ENCODE measurements at regions of chr20 and their contacts with region 1.

Region 1: DNA sequence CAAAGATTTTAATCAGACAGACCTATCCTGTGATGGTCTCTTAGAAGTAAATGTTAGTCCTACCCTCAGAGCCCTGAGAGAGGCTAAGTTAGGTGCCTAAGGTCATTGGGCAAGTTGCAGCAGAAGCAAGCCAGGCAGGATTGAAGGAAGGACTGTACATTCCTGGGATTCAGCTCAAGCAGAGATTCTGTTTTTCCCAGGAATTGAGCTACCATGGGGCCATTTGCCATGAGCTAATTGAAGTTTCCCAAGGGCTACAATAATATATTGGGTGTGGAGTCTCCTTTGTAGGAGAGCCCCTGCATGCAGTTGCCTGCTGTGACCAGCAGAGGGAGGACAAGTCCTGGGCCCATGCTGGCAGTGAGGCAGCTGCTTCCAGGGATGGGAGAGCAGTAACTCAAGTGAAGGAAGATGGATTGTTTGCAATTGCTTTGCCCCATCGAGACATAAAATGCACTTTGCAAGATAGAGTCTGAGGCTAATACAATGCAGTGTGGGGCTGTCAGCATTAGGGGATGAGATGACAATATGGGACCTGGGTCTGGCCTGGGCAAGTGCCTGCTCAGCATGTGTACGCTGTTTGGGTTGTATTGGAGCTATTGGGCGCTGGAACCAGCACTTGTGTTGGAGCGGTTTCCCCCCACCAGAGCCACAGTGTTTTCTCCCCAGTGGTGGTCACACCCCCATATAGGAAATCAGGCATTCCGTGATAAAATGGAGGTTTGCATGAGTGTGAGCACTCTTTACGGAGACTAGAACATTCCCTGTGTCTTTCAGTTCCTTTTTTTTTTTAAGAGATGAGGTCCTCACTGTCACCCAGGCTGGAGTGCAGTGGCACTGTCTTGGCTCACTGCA is 27.9 kb downstream of the DNMT3B start:
- DNase-seq: peak; percentile 89
- H3K4me3 ChIP-seq: peak overlapping the region in 1 of 2 experiments; percentile 49; a peak in 1 of 4 replicates
- H3K27ac ChIP-seq: no peak overlapping the region
- H3K4me1 ChIP-seq: no peaks in the 10 kb centered on the region
- H3K27me3 ChIP-seq: no peaks in the 10 kb centered on the region
- CTCF ChIP-seq: peak; percentile 97
- EP300 ChIP-seq: no peak
- RAD21 ChIP-seq: peak; percentile 87

Region 2: DNA sequence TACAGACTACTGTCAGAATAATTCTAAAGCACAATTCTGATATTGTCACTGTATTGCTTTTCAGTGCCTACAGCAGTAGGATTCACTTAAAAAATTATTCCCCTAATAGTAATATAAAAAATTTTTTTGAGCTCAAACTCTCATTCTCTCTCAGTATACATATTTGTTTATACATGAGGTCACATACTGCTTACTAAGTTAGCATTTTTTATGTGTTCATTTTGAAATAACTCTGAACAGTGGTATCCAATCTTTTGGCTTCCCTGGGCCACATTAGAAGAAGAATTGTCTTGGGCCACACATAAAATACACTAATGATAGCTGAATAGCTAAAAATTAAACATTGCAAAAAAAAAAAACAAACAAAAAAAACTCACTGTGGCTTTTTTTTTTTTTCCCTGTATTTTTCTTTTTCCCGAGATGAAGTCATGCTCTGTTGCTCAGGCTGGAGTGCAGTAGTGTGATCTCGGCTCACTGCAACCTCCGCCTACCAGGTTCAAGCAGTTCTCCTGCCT is 393.4 kb before region 1 on chr20:
- CTCF ChIA-PET with region 1: no interaction called
- POLR2A ChIA-PET with region 1: no interaction called
- DNase-seq: no peak
- H3K4me3 ChIP-seq: no peak overlapping the region
- H3K27ac ChIP-seq: 0 out of 4 replicates have a peak overlapping the region, but pooled peaks of 1 of the 2 experiments have one; percentile 3
- H3K4me1 ChIP-seq: no peaks in the 10 kb centered on the region; a peak in 2 of 4 replicates
- H3K27me3 ChIP-seq: no peaks in the 10 kb centered on the region
- CTCF ChIP-seq: no peak
- EP300 ChIP-seq: no peak
- RAD21 ChIP-seq: no peak

Region 3: GRCh38 chr20:32762149-32762753 is 27.9 kb before region 1 on chr20 and contains the start of gene DNMT3B:
- CTCF ChIA-PET with region 1: interaction called, 14 read pairs
- POLR2A ChIA-PET with region 1: no interaction called
- DNase-seq: peak; percentile 99
- H3K4me3 ChIP-seq: peak within 1 kb of the TSS; percentile 72 to 86
- H3K27ac ChIP-seq: peak within 1 kb of the TSS in 1 of 2 experiments; percentile 8; a peak in 1 of 4 replicates
- H3K4me1 ChIP-seq: peaks cover 0 to 12% of the 10 kb centered on the region in 2 experiments; a peak in 2 of 4 replicates
- H3K27me3 ChIP-seq: no peaks in the 10 kb centered on the region
- CTCF ChIP-seq: peak; percentile 28
- EP300 ChIP-seq: peak in 1 of 2 experiments; percentile 45; a peak in 1 of 4 replicates
- RAD21 ChIP-seq: peak; percentile 26; the same call in 1 of the 2 replicates
- polyA plus RNA-seq, gene DNMT3B: 2.2 and 2.4 TPM in 2 replicates

Region 4: GRCh38 chr20:32779500-32780211 is 10.5 kb before region 1 on chr20:
- CTCF ChIA-PET with region 1: interaction called, 83 read pairs
- POLR2A ChIA-PET with region 1: no interaction called
- DNase-seq: peak; percentile 69
- H3K4me3 ChIP-seq: no peak overlapping the region
- H3K27ac ChIP-seq: no peak overlapping the region
- H3K4me1 ChIP-seq: peaks cover 0 to 16% of the 10 kb centered on the region in 2 experiments; a peak in 3 of 4 replicates
- H3K27me3 ChIP-seq: no peaks in the 10 kb centered on the region
- CTCF ChIP-seq: no peak
- EP300 ChIP-seq: no peak
- RAD21 ChIP-seq: no peak

Region 5: DNA sequence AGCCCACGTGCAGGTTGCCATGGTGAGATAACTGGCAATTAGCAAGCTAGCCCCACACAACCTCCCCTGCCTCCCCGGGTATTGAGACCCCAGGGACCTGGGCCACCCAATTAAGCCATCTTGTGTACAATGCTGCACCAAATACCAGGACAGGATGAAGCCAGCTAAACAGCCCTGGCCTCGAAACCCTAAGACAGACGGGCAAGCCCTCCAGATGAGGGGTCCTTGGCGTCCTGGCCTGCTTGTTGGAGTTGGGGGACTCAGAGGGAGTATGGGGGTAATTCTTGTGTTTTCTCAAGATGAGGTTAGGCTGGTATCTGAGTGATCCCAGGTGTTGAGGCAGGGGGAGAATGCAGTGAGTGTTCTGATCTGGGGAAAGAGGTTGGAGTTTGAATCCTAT is 20.8 kb after region 1 on chr20:
- CTCF ChIA-PET with region 1: interaction called, 27 read pairs
- POLR2A ChIA-PET with region 1: no interaction called
- DNase-seq: no peak
- H3K4me3 ChIP-seq: no peak overlapping the region
- H3K27ac ChIP-seq: no peak overlapping the region
- H3K4me1 ChIP-seq: no peaks in the 10 kb centered on the region
- H3K27me3 ChIP-seq: no peaks in the 10 kb centered on the region
- CTCF ChIP-seq: no peak
- EP300 ChIP-seq: no peak
- RAD21 ChIP-seq: no peak

Region 6: GRCh38 chr20:32945710-32946221 is 155.6 kb after region 1 on chr20:
- CTCF ChIA-PET with region 1: interaction called, 33 read pairs
- POLR2A ChIA-PET with region 1: no interaction called
- DNase-seq: peak; percentile 44
- H3K4me3 ChIP-seq: no peak overlapping the region
- H3K27ac ChIP-seq: no peak overlapping the region
- H3K4me1 ChIP-seq: no peaks in the 10 kb centered on the region
- H3K27me3 ChIP-seq: peaks cover 11% of the 10 kb centered on the region; the same call in 1 of the 2 replicates
- CTCF ChIP-seq: peak; percentile 59
- EP300 ChIP-seq: no peak
- RAD21 ChIP-seq: peak; percentile 39

Measured in SK-N-SH (cell line).